Stomach (tissue), 19 donors: ENCODE measurements at regions of chr17 and their contacts with region 1.

Region 1: DNA sequence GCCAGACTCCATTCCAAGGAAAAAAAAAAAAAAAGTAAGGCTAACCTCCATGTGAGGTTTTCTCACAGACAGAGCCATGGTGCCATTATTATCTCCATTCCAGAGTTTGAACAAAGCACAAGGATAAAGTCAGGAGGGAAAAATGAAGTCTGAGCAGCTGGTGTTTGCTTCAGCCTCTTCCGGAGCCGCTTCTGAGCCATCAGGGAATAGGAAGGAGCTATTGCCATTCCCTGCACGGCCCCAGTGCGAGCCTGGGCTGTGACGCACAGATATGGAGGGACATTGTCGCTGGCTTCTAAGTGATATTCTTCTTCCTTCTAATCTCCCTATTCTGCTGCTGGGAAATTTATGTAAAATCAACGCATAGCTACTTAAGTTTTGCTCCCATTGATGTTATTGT is 69.5 kb upstream of the PIRT start:
- DNase-seq: no peak
- H3K4me3 ChIP-seq: no peak overlapping the region
- H3K27ac ChIP-seq: no peak overlapping the region
- H3K4me1 ChIP-seq: no peaks in the 10 kb centered on the region
- H3K27me3 ChIP-seq: no peaks in the 10 kb centered on the region
- CTCF ChIP-seq: no peak
- EP300 ChIP-seq: no peak
- POLR2A ChIP-seq: no peak

Region 2: DNA sequence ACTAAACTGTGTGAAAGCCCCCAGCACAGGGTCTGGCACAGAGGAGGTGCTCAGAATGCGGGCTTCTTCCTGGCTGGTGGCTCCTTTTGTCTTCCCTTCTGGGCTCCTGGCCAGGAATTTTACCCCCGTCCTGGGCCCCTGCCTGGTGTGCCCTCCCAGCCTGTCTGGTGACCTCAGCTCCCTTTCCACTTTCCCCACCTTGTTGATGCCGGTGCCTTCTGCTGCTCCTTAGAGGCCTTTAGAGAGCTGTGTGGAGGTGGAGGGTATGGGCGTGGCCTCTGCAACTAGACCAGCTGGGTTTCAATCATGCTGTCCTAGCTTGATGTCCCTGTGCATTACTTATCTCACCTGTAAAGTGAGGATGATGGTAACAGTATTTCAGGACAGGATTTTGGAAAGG is 86.3 kb before region 1 on chr17:
- intact Hi-C with region 1: no loop called
- DNase-seq: peak in 1 of 2 donors; percentile 68
- H3K4me3 ChIP-seq: no peak overlapping the region
- H3K27ac ChIP-seq: no peak overlapping the region
- H3K4me1 ChIP-seq: no peaks in the 10 kb centered on the region
- H3K27me3 ChIP-seq: no peaks in the 10 kb centered on the region
- CTCF ChIP-seq: no peak
- EP300 ChIP-seq: no peak
- POLR2A ChIP-seq: no peak

Region 3: GRCh38 chr17:10968007-10968406 is 60.6 kb after region 1 on chr17:
- intact Hi-C with region 1: loop called (anchors 10 kb)
- DNase-seq: no peak
- H3K4me3 ChIP-seq: no peak overlapping the region
- H3K27ac ChIP-seq: no peak overlapping the region
- H3K4me1 ChIP-seq: no peaks in the 10 kb centered on the region
- H3K27me3 ChIP-seq: no peaks in the 10 kb centered on the region
- CTCF ChIP-seq: no peak
- EP300 ChIP-seq: no peak
- POLR2A ChIP-seq: no peak